ENCODE measurements at regions of chr2 and their contacts with region 1.

Region 1: GRCh38 chr2:231925303-231926179 is 655 bp downstream of the NPPC start:
- DNase-seq: peak; percentile 62 to 93 (median 85)

Region 2: DNA sequence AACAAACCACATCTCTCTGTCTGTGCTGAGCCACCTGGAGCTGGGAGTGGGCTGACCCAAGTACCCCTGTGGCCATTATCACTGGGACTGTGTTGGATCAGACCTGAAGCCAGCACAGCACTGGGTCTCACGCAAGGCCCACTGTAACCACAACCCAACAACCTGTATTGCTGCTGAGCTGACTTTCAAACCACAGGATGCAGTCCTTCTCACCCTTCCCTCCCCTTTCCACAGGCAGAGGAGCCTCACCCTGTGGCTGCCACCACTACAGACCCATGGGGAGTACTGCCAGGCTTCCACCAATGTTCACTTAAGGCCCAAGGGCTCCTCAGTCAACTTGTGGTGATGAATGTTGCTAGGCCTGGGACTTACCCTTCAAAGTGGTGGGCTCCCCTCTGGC is 171.7 kb after region 1 on chr2:
- intact Hi-C with region 1: no loop called
- DNase-seq: no peak

Region 3: GRCh38 chr2:232142049-232142448 is 216.5 kb after region 1 on chr2:
- intact Hi-C with region 1: loop called (anchors 5 kb)
- DNase-seq: peak; percentile 5 to 82 (median 54)

Region 4: DNA sequence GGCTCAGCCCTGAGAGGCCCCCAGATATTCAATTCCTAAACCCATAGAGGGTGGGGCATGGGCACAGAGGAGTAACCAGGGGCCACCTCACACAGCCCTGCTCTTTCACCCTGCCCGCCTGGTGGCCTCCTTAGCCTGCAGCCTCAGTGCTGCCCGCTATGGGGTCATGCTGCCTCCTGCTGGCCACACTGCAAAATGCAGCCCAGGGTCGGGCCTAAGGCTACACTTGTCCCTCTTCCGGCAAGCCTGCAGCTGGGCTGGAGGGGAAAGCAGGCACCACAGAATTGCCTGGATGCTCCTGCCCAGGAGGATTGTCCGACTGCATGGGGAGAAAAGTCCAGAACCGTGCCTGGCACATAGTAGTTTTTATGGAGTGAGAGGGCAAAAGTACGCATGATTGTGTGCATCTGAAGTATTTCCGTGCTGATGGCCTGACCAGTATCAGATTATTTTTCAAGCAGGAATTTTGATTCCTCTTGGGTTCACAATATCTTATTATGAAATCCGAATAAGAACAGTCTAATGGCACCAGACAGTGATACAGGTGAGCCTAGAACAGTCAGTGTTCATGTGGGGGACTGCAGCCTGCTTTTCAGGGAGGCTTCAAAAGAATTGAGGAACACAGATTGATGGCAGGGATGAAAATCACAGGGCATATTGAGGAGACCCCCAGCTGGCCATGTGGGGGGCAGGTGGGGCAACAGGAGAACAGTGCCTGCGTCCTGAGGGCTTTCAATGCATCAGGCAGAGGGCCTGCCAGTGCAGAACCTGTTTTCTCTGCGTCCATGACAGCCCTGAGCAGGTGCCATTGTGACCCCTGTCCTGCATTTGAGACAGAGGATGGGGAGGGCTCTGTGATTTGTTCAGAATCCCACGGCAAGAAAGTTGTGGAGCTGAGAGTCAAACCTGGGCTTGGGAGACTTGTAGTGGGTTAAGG is 401.8 kb after region 1 on chr2:
- intact Hi-C with region 1: loop called (anchors 5 kb)
- DNase-seq: peak in 41 of 42 donors; percentile 48 to 90 (median 78)

Measured in head of caudate nucleus (tissue), 42 donors.